ENCODE measurements at regions of chr3 and their contacts with region 1.

Region 1: DNA sequence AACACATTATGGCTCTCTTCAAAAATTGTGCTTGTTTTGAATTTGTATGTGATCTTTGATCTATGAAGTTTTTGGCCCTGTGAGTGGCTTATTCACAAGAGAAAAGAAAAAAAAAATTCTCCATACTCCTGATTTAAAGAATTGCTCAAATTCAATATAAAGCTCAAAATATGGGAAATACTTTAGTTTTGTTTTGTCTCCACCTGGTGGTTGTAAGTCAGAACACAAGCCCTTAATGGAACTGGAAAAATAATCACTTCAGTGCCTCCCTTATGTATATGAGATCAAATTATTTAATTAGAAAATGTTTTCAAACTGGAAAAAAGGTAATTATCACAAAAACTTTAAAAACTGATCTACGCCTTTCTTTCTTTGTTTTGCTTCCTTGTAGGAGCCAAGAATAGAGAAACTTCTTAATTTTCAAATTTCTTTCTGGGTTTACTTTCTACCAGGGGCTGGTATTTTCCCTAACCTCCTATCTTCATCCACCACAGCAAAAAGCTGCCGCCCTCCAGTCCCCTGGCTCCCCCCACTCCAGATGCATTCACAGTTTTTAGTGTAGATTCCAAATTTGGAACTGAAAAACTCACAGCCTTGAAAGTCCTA is 50.6 kb downstream of the SERP1 start:
- DNase-seq: no peak
- H3K4me3 ChIP-seq: no peak overlapping the region
- H3K27ac ChIP-seq: no peak overlapping the region
- H3K4me1 ChIP-seq: peaks cover 0 to 12% (median 8%) of the 10 kb centered on the region in 6 donors
- H3K27me3 ChIP-seq: no peaks in the 10 kb centered on the region
- CTCF ChIP-seq: peak; percentile 66 to 88 (median 84)
- POLR2A ChIP-seq: no peak

Region 2: GRCh38 chr3:150286390-150287147 is 209.1 kb before region 1 on chr3:
- intact Hi-C with region 1: loop called (anchors 2 kb)
- DNase-seq: no peak
- H3K4me3 ChIP-seq: no peak overlapping the region
- H3K27ac ChIP-seq: no peak overlapping the region
- H3K4me1 ChIP-seq: no peaks in the 10 kb centered on the region
- H3K27me3 ChIP-seq: no peaks in the 10 kb centered on the region
- CTCF ChIP-seq: peak; percentile 37 to 69 (median 59)
- POLR2A ChIP-seq: no peak

Region 3: GRCh38 chr3:150409512-150410310 is 86.0 kb before region 1 on chr3:
- intact Hi-C with region 1: loop called (anchors 5 kb)
- DNase-seq: peak; percentile 95
- H3K4me3 ChIP-seq: peak overlapping the region; percentile 75 to 96 (median 88)
- H3K27ac ChIP-seq: peak overlapping the region; percentile 99 to 100 (median 100)
- H3K4me1 ChIP-seq: peaks cover 7 to 62% (median 45%) of the 10 kb centered on the region in 6 donors
- H3K27me3 ChIP-seq: no peaks in the 10 kb centered on the region
- CTCF ChIP-seq: peak in 10 of 11 experiments; percentile 44 to 82 (median 59)
- POLR2A ChIP-seq: no peak